CD8-positive, alpha-beta T cell (primary cell): ENCODE measurements at regions of chr3 and their contacts with region 1.

Region 1: DNA sequence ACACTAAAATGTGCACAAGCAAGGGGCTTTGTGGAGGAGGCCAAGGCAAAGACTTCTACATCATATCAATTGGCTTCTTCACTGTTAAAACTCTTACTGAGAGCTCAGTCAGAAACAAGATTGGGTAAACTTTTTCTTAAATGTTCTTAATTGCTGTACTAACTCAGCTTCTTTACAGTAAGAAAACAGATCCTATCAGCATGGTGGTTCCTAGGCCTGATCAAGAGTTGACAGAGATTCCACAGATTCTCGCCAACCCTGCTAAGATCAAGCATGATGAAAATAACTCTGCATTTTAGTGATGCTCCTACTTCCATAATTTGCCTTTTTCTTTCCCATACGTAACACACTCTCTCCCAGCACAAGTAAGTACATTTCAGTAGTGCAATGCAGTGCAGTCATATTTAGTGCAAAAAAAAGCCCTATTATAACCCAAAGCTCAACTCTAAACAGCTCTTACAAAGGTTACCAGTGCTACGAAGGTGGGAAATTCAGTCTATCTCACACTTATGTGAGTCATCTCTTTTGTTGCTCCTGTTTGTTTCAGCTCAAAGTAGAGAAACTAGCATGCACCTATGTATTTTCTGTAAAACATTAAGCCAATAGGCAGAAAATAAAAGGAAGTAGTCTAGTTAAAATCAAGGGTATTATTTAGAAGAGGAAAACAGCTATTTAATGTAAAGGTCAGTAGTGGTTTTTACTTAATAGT is 29.9 kb downstream of the TIGIT start:
- DNase-seq: peak in 2 of 9 experiments; percentile 42 to 62
- ATAC-seq: peak; percentile 74
- H3K4me3 ChIP-seq: no peak overlapping the region
- H3K4me3 Mint-ChIP-seq: peak overlapping the region; percentile 3
- H3K27ac ChIP-seq: peak overlapping the region in 1 of 2 experiments; percentile 52
- H3K27ac Mint-ChIP-seq: peak overlapping the region; percentile 46
- H3K4me1 ChIP-seq: peaks cover 11% of the 10 kb centered on the region
- H3K4me1 Mint-ChIP-seq: peaks cover 64% of the 10 kb centered on the region
- H3K27me3 ChIP-seq: no peaks in the 10 kb centered on the region
- H3K27me3 Mint-ChIP-seq: no peaks in the 10 kb centered on the region
- CTCF ChIP-seq: no peak

Region 2: DNA sequence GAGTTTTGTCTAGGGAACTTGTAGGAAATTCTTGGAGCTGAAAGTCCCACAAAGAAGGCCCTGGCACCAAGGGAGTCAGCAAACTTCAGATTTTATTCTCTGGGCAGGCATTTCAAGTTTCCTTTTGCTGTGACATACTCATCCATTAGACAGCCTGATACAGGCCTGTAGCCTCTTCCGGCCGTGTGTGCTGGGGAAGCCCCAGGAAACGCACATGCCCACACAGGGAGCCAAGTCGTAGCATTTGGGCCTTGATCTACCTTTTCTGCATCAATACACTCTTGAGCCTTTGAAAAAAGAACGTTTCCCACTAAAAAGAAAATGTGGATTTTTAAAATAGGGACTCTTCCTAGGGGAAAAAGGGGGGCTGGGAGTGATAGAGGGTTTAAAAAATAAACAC is 14.9 kb before region 1 on chr3:
- CTCF ChIA-PET with region 1: interaction called, 3 read pairs
- POLR2A ChIA-PET with region 1: interaction called, 12 read pairs
- intact Hi-C with region 1: loop called in 1 of 2 experiments (anchors 2 kb)
- DNase-seq: peak; percentile 14 to 88 (median 51)
- ATAC-seq: peak; percentile 82
- H3K4me3 ChIP-seq: no peak overlapping the region
- H3K4me3 Mint-ChIP-seq: peak overlapping the region; percentile 38
- H3K27ac ChIP-seq: peak overlapping the region; percentile 55 to 91
- H3K27ac Mint-ChIP-seq: peak overlapping the region; percentile 87
- H3K4me1 ChIP-seq: peaks cover 30% of the 10 kb centered on the region
- H3K4me1 Mint-ChIP-seq: peaks cover 56% of the 10 kb centered on the region
- H3K27me3 ChIP-seq: no peaks in the 10 kb centered on the region
- H3K27me3 Mint-ChIP-seq: no peaks in the 10 kb centered on the region
- CTCF ChIP-seq: no peak

Region 3: DNA sequence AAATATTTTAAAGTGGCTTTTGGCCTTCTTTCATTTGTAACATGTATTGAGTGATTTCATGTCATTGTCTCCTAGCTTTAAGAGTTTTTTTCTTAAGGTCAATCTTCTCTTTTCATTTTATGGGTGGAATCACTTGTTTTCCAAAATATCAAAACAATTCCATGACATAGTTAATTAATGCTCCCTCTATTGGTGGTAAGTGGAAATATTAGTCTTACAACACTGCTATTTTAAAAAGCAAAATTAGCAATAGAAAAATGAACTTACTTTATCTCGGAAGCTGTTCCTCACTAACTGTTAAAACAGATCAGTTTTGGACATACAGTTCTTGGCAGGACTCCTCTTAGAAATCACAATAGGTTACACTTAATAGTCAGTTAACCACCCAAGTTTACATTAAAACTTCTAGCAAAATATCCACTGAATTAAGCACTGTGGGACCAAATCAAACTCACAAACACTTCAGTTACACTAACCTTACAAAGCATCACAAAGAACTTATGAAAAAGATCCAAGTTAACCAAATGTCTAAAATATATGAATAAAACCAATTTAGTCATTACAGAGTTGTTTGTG is 12.5 kb after region 1 on chr3:
- CTCF ChIA-PET with region 1: interaction called, 5 read pairs
- POLR2A ChIA-PET with region 1: interaction called, 3 read pairs
- intact Hi-C with region 1: loop called in 1 of 2 experiments (anchors 2 kb)
- DNase-seq: peak in 1 of 9 experiments; percentile 36
- ATAC-seq: no peak
- H3K4me3 ChIP-seq: no peak overlapping the region
- H3K4me3 Mint-ChIP-seq: no peak overlapping the region
- H3K27ac ChIP-seq: no peak overlapping the region
- H3K27ac Mint-ChIP-seq: no peak overlapping the region
- H3K4me1 ChIP-seq: no peaks in the 10 kb centered on the region
- H3K4me1 Mint-ChIP-seq: peaks cover 48% of the 10 kb centered on the region
- H3K27me3 ChIP-seq: no peaks in the 10 kb centered on the region
- H3K27me3 Mint-ChIP-seq: no peaks in the 10 kb centered on the region
- CTCF ChIP-seq: peak; percentile 61